B cell (primary cell): ENCODE measurements at regions of chr12 and their contacts with region 1.

Region 1: DNA sequence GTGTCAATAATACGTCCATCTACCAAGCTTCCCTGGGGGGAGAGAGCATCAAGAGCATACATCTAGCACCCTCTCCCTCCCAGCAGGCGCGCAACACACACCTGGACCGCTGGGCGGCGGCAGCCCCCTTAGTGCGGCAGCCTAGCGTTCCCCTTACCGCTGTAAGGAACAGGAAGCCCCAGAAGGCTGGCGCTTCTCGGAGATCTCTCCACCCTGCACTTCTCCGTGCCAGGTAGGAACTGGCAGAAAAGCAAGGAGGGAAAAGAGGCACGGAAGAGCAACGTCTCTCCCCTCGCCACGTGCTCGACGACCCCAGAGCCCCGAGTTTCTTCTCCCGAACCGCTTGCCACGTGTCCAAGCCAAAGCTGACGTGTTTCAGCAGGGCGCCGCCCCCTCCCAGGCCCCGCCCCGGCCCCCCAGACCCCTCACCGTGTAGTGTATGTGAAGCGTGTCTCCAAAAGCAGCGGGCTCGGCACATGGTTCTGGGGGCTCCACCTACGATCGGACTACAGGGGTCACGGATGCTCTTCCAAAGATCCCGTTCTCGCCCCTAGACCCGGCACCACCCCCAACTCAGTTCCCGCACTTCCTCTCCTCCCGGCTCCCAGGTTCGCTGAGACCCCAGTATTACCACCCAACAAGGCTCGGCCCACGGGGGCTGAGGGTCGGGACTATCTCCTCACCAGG is 532 bp downstream of the FKBP11 start:
- DNase-seq: peak; percentile 88
- ATAC-seq: peak; percentile 82
- H3K4me3 ChIP-seq: peak overlapping the region; percentile 70 to 100 (median 84)
- H3K4me3 Mint-ChIP-seq: peak overlapping the region; percentile 98
- H3K27ac ChIP-seq: peak overlapping the region; percentile 88 to 94
- H3K27ac Mint-ChIP-seq: peak overlapping the region; percentile 95
- H3K4me1 ChIP-seq: peaks cover 10 to 12% of the 10 kb centered on the region in 2 donors
- H3K4me1 Mint-ChIP-seq: peaks cover 14% of the 10 kb centered on the region
- H3K27me3 ChIP-seq: no peaks in the 10 kb centered on the region
- H3K27me3 Mint-ChIP-seq: no peaks in the 10 kb centered on the region
- CTCF ChIP-seq: peak; percentile 86

Region 2: GRCh38 chr12:48903982-48904411 is 20.8 kb before region 1 on chr12:
- CTCF ChIA-PET with region 1: interaction called, 25 read pairs
- POLR2A ChIA-PET with region 1: no interaction called
- intact Hi-C with region 1: loop called (anchors 2 kb)
- DNase-seq: peak; percentile 84
- ATAC-seq: peak; percentile 91
- H3K4me3 ChIP-seq: peak overlapping the region in 4 of 5 experiments; percentile 11 to 49 (median 40)
- H3K4me3 Mint-ChIP-seq: peak overlapping the region; percentile 83
- H3K27ac ChIP-seq: no peak overlapping the region
- H3K27ac Mint-ChIP-seq: no peak overlapping the region
- H3K4me1 ChIP-seq: peaks cover 11 to 12% of the 10 kb centered on the region in 2 donors
- H3K4me1 Mint-ChIP-seq: peaks cover 7% of the 10 kb centered on the region
- H3K27me3 ChIP-seq: peaks cover 0 to 5% (median 2%) of the 10 kb centered on the region in 4 experiments
- H3K27me3 Mint-ChIP-seq: peaks cover 19% of the 10 kb centered on the region
- CTCF ChIP-seq: peak; percentile 60

Region 3: DNA sequence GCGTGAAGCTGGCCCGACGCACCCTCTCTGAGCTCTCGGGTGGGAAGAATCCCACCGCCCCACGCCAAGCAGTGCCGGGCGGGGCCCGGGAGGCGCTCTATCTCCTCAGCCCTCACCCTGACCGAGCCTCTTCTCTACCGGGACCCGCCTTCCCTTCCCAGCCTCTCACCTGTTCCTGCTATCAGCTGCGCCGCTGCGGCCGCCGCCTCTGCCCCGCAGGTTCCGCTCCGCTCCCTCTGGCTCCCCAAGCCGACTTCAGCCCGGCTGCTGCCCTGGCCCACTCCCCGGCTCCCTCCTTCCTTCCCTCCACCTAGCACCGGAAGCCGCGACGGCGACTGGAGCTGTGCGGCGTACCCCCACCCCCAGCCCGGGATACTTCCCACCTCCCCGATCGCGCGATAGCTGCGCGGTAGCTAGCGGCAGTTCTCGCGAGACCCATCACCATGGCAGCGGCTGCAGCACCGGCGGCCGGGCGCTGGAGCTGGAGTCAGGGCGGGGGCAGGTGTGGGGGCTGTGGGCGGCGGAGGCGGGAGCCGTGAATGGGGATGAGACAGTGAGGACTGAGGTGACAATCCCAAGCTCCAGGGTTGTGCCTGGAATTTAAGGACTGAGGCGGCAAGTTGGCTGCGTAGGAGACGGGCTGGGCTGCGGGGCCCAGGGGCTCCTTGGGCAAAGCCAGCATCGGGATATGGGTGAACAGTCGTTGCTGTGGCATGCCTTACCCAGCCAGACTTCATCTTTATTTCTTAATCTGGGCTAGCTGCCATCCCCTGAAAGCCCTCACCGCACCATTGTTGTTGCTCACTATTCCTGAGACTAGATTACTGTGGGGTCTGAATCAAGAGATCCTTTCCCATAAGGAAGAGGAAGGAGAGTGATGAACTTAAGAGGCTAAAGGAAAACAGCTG is 32.6 kb after region 1 on chr12 and contains the start of gene ARF3:
- CTCF ChIA-PET with region 1: interaction called, 7 read pairs
- POLR2A ChIA-PET with region 1: interaction called, 8 read pairs
- intact Hi-C with region 1: loop called (anchors 1 kb)
- DNase-seq: peak; percentile 94
- ATAC-seq: peak; percentile 95
- H3K4me3 ChIP-seq: peak within 1 kb of the TSS; percentile 59 to 96 (median 91)
- H3K4me3 Mint-ChIP-seq: peak within 1 kb of the TSS; percentile 95
- H3K27ac ChIP-seq: peak within 1 kb of the TSS; percentile 44 to 81
- H3K27ac Mint-ChIP-seq: peak within 1 kb of the TSS; percentile 92
- H3K4me1 ChIP-seq: peaks cover 34 to 36% of the 10 kb centered on the region in 2 donors
- H3K4me1 Mint-ChIP-seq: peaks cover 42% of the 10 kb centered on the region
- H3K27me3 ChIP-seq: peaks cover 0 to 3% (median 0%) of the 10 kb centered on the region in 4 experiments
- H3K27me3 Mint-ChIP-seq: no peaks in the 10 kb centered on the region
- CTCF ChIP-seq: no peak
- total RNA-seq, gene ARF3: 77.5 and 83.6 TPM in 2 replicates

Region 4: GRCh38 chr12:48988030-48988649 is 63.4 kb after region 1 on chr12:
- CTCF ChIA-PET with region 1: interaction called, 25 read pairs
- POLR2A ChIA-PET with region 1: interaction called, 6 read pairs
- intact Hi-C with region 1: loop called (anchors 1 kb)
- DNase-seq: peak; percentile 76
- ATAC-seq: peak; percentile 71
- H3K4me3 ChIP-seq: no peak overlapping the region
- H3K4me3 Mint-ChIP-seq: no peak overlapping the region
- H3K27ac ChIP-seq: no peak overlapping the region
- H3K27ac Mint-ChIP-seq: no peak overlapping the region
- H3K4me1 ChIP-seq: peaks cover 0 to 5% of the 10 kb centered on the region in 2 donors
- H3K4me1 Mint-ChIP-seq: peaks cover 6% of the 10 kb centered on the region
- H3K27me3 ChIP-seq: peaks cover 0 to 51% (median 22%) of the 10 kb centered on the region in 4 experiments
- H3K27me3 Mint-ChIP-seq: peaks cover 48% of the 10 kb centered on the region
- CTCF ChIP-seq: peak; percentile 84

Region 5: DNA sequence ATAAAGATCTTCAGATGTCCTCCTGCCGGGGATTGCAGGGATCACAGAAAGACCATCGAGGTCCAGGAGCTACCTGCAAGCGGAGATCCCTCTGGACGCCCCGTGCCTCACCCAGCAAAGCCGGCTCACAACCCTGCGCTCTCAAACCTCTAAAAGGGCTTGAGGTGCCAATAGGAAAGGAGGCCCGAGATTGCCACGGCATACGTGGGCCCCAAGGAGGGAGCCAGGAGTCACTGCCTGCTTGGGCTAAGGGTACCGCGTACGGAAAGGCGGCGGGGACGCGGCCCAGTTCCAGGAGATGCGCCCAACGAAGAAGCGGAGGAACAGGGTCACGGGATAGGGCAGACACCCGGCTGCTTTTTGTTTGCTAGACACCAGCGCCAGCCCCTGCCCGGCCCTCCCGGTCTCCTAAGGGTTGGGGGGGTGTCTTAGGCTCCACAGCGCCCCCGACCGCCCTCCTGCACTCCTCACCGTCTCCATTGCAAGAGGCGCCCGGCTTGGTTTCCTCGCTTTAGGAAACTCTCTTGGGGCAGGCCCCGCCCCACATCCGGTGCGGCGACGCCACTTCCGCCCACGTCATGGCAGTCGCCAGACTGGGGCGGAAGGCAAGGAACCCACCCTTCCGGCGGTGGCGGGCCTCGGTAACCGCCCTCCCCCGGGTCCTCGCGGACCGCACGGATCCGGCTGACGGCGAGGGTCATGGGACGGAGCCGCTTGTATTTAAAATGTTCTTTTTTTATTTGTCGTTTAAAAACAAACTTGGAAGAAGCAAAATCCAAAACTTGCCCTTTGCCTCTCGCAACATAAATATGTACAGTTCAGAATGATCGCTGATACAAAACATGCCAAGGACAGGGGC is 93.7 kb after region 1 on chr12 and contains the start of gene PRKAG1:
- CTCF ChIA-PET with region 1: interaction called, 11 read pairs
- POLR2A ChIA-PET with region 1: no interaction called
- intact Hi-C with region 1: loop called (anchors 1 kb)
- DNase-seq: peak; percentile 98
- ATAC-seq: peak; percentile 88
- H3K4me3 ChIP-seq: peak within 1 kb of the TSS; percentile 79 to 88 (median 86)
- H3K4me3 Mint-ChIP-seq: peak within 1 kb of the TSS; percentile 91
- H3K27ac ChIP-seq: peak within 1 kb of the TSS; percentile 95 to 99
- H3K27ac Mint-ChIP-seq: peak within 1 kb of the TSS; percentile 98
- H3K4me1 ChIP-seq: peaks cover 18 to 21% of the 10 kb centered on the region in 2 donors
- H3K4me1 Mint-ChIP-seq: peaks cover 29% of the 10 kb centered on the region
- H3K27me3 ChIP-seq: no peaks in the 10 kb centered on the region
- H3K27me3 Mint-ChIP-seq: no peaks in the 10 kb centered on the region
- CTCF ChIP-seq: peak; percentile 74
- total RNA-seq, gene PRKAG1: 58.6 and 60.0 TPM in 2 replicates

Region 6: GRCh38 chr12:49730568-49731101 is 805.9 kb after region 1 on chr12:
- CTCF ChIA-PET with region 1: no interaction called
- POLR2A ChIA-PET with region 1: no interaction called
- intact Hi-C with region 1: no loop called
- DNase-seq: no peak
- ATAC-seq: no peak
- H3K4me3 ChIP-seq: no peak overlapping the region
- H3K4me3 Mint-ChIP-seq: no peak overlapping the region
- H3K27ac ChIP-seq: no peak overlapping the region
- H3K27ac Mint-ChIP-seq: no peak overlapping the region
- H3K4me1 ChIP-seq: no peaks in the 10 kb centered on the region
- H3K4me1 Mint-ChIP-seq: no peaks in the 10 kb centered on the region
- H3K27me3 ChIP-seq: peaks cover 0 to 2% (median 0%) of the 10 kb centered on the region in 4 experiments
- H3K27me3 Mint-ChIP-seq: peaks cover 9% of the 10 kb centered on the region
- CTCF ChIP-seq: no peak